H1 (cell line): ENCODE measurements at regions of chr2 and their contacts with region 1.

Region 1: GRCh38 chr2:113198790-113199612 is 25.2 kb downstream of the PSD4 start:
- DNase-seq: peak; percentile 54 to 95
- H3K4me3 ChIP-seq: peak overlapping the region; percentile 57 to 73 (median 66)
- H3K27ac ChIP-seq: no peak overlapping the region
- H3K4me1 ChIP-seq: no peaks in the 10 kb centered on the region; a peak in 3 of 7 replicates
- H3K27me3 ChIP-seq: peaks cover 0 to 2% (median 0%) of the 10 kb centered on the region in 4 experiments; a peak in 1 of 7 replicates
- CTCF ChIP-seq: peak; percentile 86 to 96 (median 89)
- EP300 ChIP-seq: 0 out of 3 replicates have a peak, but pooled peaks of 1 of the 2 experiments have one; percentile 1
- POLR2A ChIP-seq: 0 out of 3 replicates have a peak, but pooled peaks of 1 of the 2 experiments have one; percentile 15
- RAD21 ChIP-seq: peak; percentile 57 to 71

Region 2: GRCh38 chr2:112985090-112985489 is 213.9 kb before region 1 on chr2:
- CTCF ChIA-PET with region 1: no interaction called
- POLR2A ChIA-PET with region 1: no interaction called
- DNase-seq: no peak
- H3K4me3 ChIP-seq: no peak overlapping the region
- H3K27ac ChIP-seq: no peak overlapping the region
- H3K4me1 ChIP-seq: no peaks in the 10 kb centered on the region
- H3K27me3 ChIP-seq: no peaks in the 10 kb centered on the region; a peak in 1 of 7 replicates
- CTCF ChIP-seq: no peak
- EP300 ChIP-seq: no peak
- POLR2A ChIP-seq: no peak
- RAD21 ChIP-seq: no peak

Region 3: GRCh38 chr2:113157118-113157896 is 41.7 kb before region 1 on chr2:
- CTCF ChIA-PET with region 1: interaction called, 31 read pairs
- POLR2A ChIA-PET with region 1: interaction called, 6 read pairs
- DNase-seq: peak in 1 of 2 experiments; percentile 64
- H3K4me3 ChIP-seq: peak overlapping the region; percentile 41 to 66 (median 58)
- H3K27ac ChIP-seq: no peak overlapping the region
- H3K4me1 ChIP-seq: peaks cover 1 to 10% (median 2%) of the 10 kb centered on the region in 4 experiments; a peak in 4 of 7 replicates
- H3K27me3 ChIP-seq: peaks cover 2 to 14% (median 10%) of the 10 kb centered on the region in 4 experiments
- CTCF ChIP-seq: no peak; a peak in 1 of 4 replicates
- EP300 ChIP-seq: no peak
- POLR2A ChIP-seq: no peak
- RAD21 ChIP-seq: no peak

Region 4: DNA sequence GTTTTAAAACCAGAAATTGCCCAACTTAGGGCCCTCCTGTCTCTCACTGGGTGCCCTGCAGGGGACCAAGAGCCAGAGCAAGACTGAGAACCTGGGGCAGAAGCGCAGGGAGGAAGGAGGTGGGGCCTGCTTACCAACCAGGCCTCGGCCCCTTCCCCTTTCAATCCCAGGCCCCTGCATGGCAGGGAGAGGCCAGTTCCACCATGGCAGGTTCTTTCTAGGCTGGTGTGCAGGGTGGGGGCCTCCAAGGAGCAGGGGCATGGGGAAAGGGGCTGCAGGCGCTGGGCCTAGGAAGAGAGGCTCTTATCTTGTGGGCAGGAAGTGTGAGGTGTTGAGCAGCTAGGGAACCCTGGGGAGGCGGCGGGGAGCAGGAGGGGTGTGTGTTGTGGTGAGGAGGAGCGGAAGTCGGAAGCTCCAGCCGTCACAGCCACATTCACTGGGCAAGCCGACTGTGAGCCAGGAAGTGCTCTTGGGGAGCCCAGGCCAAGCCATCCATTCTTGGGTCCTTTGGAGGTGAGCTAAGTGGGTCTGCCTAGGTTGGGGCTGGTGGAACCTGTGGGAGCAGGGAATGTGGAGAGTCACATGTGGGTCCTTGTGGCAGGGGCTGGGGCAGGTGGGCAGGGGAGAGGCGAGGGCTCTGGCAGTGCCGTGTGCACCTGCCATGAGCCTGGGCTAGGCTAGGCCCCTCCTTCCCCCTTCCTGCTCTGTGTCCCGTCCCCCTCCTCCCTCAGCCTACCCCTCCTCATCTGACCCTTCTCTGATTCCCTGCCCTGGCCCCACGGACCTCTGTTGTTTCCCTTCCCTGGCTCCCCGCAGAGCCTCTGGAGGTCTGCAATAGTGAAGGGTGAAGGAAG is 25.2 kb before region 1 on chr2 and contains the start of gene PSD4:
- CTCF ChIA-PET with region 1: interaction called, 22 read pairs
- POLR2A ChIA-PET with region 1: no interaction called
- DNase-seq: no peak
- H3K4me3 ChIP-seq: no peak within 1 kb of the TSS
- H3K27ac ChIP-seq: no peak within 1 kb of the TSS
- H3K4me1 ChIP-seq: peaks cover 0 to 3% (median 0%) of the 10 kb centered on the region in 4 experiments; a peak in 3 of 7 replicates
- H3K27me3 ChIP-seq: no peaks in the 10 kb centered on the region
- CTCF ChIP-seq: no peak
- EP300 ChIP-seq: no peak
- POLR2A ChIP-seq: no peak
- RAD21 ChIP-seq: no peak
- total RNA-seq, gene PSD4: 1.2 and 1.3 TPM in 2 replicates

Region 5: DNA sequence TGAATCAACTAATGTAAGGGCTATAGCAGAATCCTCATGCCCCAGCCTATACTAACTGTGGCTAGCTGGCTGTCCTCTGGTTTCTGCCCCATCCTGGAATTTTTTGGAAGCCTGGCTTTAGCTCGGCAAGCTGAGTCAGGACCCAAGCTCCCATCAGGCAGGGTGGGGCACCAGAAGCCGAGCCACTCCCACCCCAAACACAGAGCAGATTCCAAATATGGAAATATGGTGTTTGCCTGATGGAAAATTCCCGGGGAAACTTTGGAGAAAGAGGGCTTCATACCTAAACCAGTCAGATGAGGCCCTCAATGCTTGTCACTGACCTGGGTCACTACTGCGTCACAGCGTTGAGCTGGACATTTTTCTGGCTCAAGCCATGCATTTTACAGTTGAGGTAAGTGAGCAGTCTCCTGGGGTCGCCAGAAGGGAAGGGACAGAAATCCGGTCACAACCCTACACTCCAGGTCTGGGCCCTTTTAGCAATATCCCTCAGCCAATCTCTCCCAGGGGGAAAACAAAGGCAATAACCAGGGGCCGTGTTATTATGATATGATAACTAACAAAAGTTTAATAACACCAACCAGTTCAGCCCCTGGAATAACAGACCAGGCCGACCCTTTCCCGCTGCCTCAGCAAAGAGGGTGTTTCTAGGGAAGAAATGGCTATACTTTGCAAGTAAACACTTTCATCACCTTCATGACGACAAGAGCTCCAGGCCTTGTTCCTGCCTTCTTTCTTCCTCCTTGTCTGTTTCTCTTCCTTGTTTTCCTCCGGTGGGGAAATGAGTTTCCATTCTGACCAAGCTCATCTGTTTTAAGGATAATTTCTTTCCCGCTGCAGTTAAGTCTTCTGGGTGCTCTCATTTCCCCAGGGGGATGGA is 12.5 kb after region 1 on chr2:
- CTCF ChIA-PET with region 1: interaction called, 43 read pairs
- POLR2A ChIA-PET with region 1: interaction called, 7 read pairs
- DNase-seq: no peak
- H3K4me3 ChIP-seq: no peak overlapping the region
- H3K27ac ChIP-seq: no peak overlapping the region
- H3K4me1 ChIP-seq: peaks cover 0 to 2% (median 0%) of the 10 kb centered on the region in 4 experiments; a peak in 2 of 7 replicates
- H3K27me3 ChIP-seq: peaks cover 0 to 3% (median 0%) of the 10 kb centered on the region in 4 experiments; a peak in 1 of 7 replicates
- CTCF ChIP-seq: no peak
- EP300 ChIP-seq: no peak
- POLR2A ChIP-seq: no peak
- RAD21 ChIP-seq: no peak

Region 6: GRCh38 chr2:113273027-113273551 is 74.1 kb after region 1 on chr2:
- CTCF ChIA-PET with region 1: interaction called, 11 read pairs
- POLR2A ChIA-PET with region 1: no interaction called
- DNase-seq: peak in 1 of 2 experiments; percentile 59
- H3K4me3 ChIP-seq: peak overlapping the region in 1 of 4 experiments; percentile 47; a peak in 2 of 8 replicates
- H3K27ac ChIP-seq: no peak overlapping the region
- H3K4me1 ChIP-seq: peaks cover 4 to 8% (median 7%) of the 10 kb centered on the region in 4 experiments
- H3K27me3 ChIP-seq: peaks cover 55 to 83% (median 74%) of the 10 kb centered on the region in 4 experiments
- CTCF ChIP-seq: peak; percentile 45 to 53 (median 45)
- EP300 ChIP-seq: no peak
- POLR2A ChIP-seq: no peak
- RAD21 ChIP-seq: peak; percentile 25 to 41; a peak in 3 of 4 replicates

Region 7: DNA sequence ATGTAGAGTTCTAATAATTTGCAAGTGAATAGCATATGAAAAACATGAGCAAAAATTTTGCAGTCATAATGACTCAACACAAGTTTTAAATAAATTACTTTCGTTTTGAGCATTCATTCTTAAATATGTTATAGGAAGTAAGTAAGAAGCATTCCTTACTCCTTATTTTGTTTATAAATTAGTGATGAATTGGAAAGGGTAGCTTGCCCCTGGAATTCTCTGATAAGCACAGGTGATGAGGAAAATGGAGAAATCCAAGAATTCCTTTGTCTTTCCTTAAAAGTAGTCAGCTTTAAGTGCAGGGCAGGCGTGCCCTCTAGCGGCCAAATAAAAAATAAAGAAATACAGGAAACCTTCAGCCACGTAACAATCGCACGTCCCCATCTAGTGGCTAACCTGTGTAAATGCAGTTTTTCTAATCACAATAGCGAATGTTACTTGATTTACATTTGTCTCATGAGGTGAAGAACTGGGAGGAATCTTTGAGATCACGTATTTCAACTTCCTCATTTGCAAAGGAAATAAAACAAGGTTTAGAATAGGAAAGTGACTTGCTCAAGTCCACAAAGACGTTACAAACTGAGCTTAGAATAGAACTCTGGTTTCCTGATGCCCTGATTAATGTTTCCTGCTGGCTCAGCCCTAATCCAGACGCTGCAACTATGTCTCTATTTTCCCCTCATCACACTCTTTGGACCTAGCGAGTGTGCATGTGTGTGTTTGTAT is 191.3 kb after region 1 on chr2:
- CTCF ChIA-PET with region 1: interaction called, 44 read pairs
- POLR2A ChIA-PET with region 1: no interaction called
- DNase-seq: peak in 1 of 2 experiments; percentile 62
- H3K4me3 ChIP-seq: no peak overlapping the region
- H3K27ac ChIP-seq: no peak overlapping the region
- H3K4me1 ChIP-seq: no peaks in the 10 kb centered on the region
- H3K27me3 ChIP-seq: no peaks in the 10 kb centered on the region
- CTCF ChIP-seq: peak in 2 of 3 experiments; percentile 84 to 99; a peak in 3 of 4 replicates
- EP300 ChIP-seq: no peak
- POLR2A ChIP-seq: no peak
- RAD21 ChIP-seq: peak; percentile 84 to 85